ENCODE measurements at regions of chr2 and their contacts with region 1.

Region 1: GRCh38 chr2:108607706-108608301 is 73.5 kb downstream of the LIMS1 start:
- DNase-seq: peak in 3 of 5 donors; percentile 26 to 74 (median 38)
- H3K4me3 ChIP-seq: no peak overlapping the region
- H3K4me3 Mint-ChIP-seq: no peak overlapping the region
- H3K27ac ChIP-seq: no peak overlapping the region
- H3K27ac Mint-ChIP-seq: no peak overlapping the region
- H3K4me1 ChIP-seq: peaks cover 23% of the 10 kb centered on the region
- H3K4me1 Mint-ChIP-seq: peaks cover 51 to 54% (median 54%) of the 10 kb centered on the region in 3 donors
- H3K27me3 ChIP-seq: no peaks in the 10 kb centered on the region
- H3K27me3 Mint-ChIP-seq: no peaks in the 10 kb centered on the region

Region 2: GRCh38 chr2:108594132-108594981 is 13.4 kb before region 1 on chr2:
- CTCF ChIA-PET with region 1: no interaction called
- POLR2A ChIA-PET with region 1: no interaction called
- DNase-seq: no peak
- H3K4me3 ChIP-seq: no peak overlapping the region
- H3K4me3 Mint-ChIP-seq: no peak overlapping the region
- H3K27ac ChIP-seq: peak overlapping the region; percentile 25
- H3K27ac Mint-ChIP-seq: peak overlapping the region in 4 of 8 donors; percentile 18 to 62 (median 36)
- H3K4me1 ChIP-seq: peaks cover 12% of the 10 kb centered on the region
- H3K4me1 Mint-ChIP-seq: peaks cover 17 to 24% (median 22%) of the 10 kb centered on the region in 3 donors
- H3K27me3 ChIP-seq: no peaks in the 10 kb centered on the region
- H3K27me3 Mint-ChIP-seq: no peaks in the 10 kb centered on the region

Region 3: GRCh38 chr2:108621087-108621559 is 13.3 kb after region 1 on chr2:
- CTCF ChIA-PET with region 1: interaction called, 9 read pairs
- POLR2A ChIA-PET with region 1: interaction called, 13 read pairs
- DNase-seq: peak; percentile 40 to 88 (median 72)
- H3K4me3 ChIP-seq: peak overlapping the region; percentile 35
- H3K4me3 Mint-ChIP-seq: peak overlapping the region; percentile 88 to 91 (median 89)
- H3K27ac ChIP-seq: peak overlapping the region; percentile 41
- H3K27ac Mint-ChIP-seq: peak overlapping the region; percentile 85 to 97 (median 94)
- H3K4me1 ChIP-seq: peaks cover 73% of the 10 kb centered on the region
- H3K4me1 Mint-ChIP-seq: peaks cover 74 to 94% (median 83%) of the 10 kb centered on the region in 3 donors
- H3K27me3 ChIP-seq: no peaks in the 10 kb centered on the region
- H3K27me3 Mint-ChIP-seq: no peaks in the 10 kb centered on the region